Psoas muscle (tissue), 8 donors: ENCODE measurements at regions of chr14 and their contacts with region 1.

Region 1: GRCh38 chr14:73785873-73786695 is 65.5 kb upstream of the PTGR2 start:
- DNase-seq: peak; percentile 80 to 91
- ATAC-seq: peak; percentile 77 to 89 (median 86)
- H3K4me3 ChIP-seq: peak overlapping the region; percentile 82
- H3K27ac ChIP-seq: peak overlapping the region; percentile 98
- H3K4me1 ChIP-seq: peaks cover 71% of the 10 kb centered on the region
- H3K27me3 ChIP-seq: no peaks in the 10 kb centered on the region
- CTCF ChIP-seq: peak; percentile 28

Region 2: GRCh38 chr14:73753959-73754882 is 31.9 kb before region 1 on chr14:
- intact Hi-C with region 1: loop called (anchors 2 kb)
- DNase-seq: no peak
- ATAC-seq: peak in 3 of 4 donors; percentile 9 to 27 (median 21)
- H3K4me3 ChIP-seq: peak overlapping the region; percentile 53
- H3K27ac ChIP-seq: peak overlapping the region; percentile 96
- H3K4me1 ChIP-seq: peaks cover 98% of the 10 kb centered on the region
- H3K27me3 ChIP-seq: no peaks in the 10 kb centered on the region
- CTCF ChIP-seq: no peak

Region 3: GRCh38 chr14:73759714-73760597 is 26.1 kb before region 1 on chr14:
- intact Hi-C with region 1: loop called (anchors 2 kb)
- DNase-seq: peak; percentile 97 to 98
- ATAC-seq: peak; percentile 77 to 82 (median 80)
- H3K4me3 ChIP-seq: peak overlapping the region; percentile 78
- H3K27ac ChIP-seq: peak overlapping the region; percentile 96
- H3K4me1 ChIP-seq: peaks cover 86% of the 10 kb centered on the region
- H3K27me3 ChIP-seq: no peaks in the 10 kb centered on the region
- CTCF ChIP-seq: no peak

Region 4: DNA sequence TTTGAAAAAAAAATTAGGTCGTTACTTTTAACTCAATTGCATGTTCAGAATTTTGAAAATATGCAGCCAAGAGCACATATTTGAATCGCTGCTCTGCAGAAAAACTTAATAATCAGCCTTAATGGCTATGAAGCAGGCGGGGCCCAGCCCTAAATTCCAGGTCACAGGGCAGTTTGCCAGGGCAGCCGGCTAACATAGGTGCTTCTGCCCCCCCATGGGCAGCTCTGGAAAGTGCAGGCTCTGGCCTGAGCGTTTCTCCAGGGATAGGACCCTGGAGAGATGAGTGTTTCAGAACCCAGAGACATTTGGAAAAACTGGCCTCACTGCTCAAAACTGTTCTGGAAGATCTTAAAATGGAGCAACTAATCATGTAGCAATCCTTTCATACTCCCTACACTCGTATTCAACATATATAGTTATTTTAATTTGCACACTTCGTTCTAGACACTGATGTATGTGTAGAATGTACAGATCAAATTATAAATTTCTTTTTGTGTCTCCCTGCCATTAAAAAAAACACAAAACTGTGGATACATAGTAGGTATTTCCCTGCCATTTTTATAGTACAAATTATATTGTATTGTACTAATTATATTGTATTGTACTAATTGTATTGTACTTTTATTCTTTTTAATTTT is 39.6 kb after region 1 on chr14:
- intact Hi-C with region 1: loop called in 1 of 2 experiments (anchors 5 kb)
- DNase-seq: peak; percentile 92 to 96
- ATAC-seq: peak; percentile 94 to 99 (median 98)
- H3K4me3 ChIP-seq: no peak overlapping the region
- H3K27ac ChIP-seq: no peak overlapping the region
- H3K4me1 ChIP-seq: peaks cover 12% of the 10 kb centered on the region
- H3K27me3 ChIP-seq: no peaks in the 10 kb centered on the region
- CTCF ChIP-seq: peak; percentile 95

Region 5: GRCh38 chr14:73886449-73887317 is 100.6 kb after region 1 on chr14 and contains the start of gene ZNF410:
- intact Hi-C with region 1: loop called in 1 of 2 experiments (anchors 5 kb)
- DNase-seq: peak; percentile 95 to 97
- ATAC-seq: peak; percentile 98 to 99 (median 98)
- H3K4me3 ChIP-seq: peak within 1 kb of the TSS; percentile 89
- H3K27ac ChIP-seq: peak within 1 kb of the TSS; percentile 94
- H3K4me1 ChIP-seq: peaks cover 15% of the 10 kb centered on the region
- H3K27me3 ChIP-seq: no peaks in the 10 kb centered on the region
- CTCF ChIP-seq: no peak
- total RNA-seq, gene ZNF410: 13.1 to 22.7 (median 21.1) TPM